Activated T-helper 2 cell treated with anti-CD3 and anti-CD28 coated beads, Interferon-gamma antibody, Interleukin-2, Interleukin-4, amounts not matched to agents 10 μg/mL and 5 μg/mL and 100 μg/mL, durations not matched to agents 14 hours and 24 hours and 36 hours (primary cell): ENCODE measurements at regions of chr6 and their contacts with region 1.

Region 1: DNA sequence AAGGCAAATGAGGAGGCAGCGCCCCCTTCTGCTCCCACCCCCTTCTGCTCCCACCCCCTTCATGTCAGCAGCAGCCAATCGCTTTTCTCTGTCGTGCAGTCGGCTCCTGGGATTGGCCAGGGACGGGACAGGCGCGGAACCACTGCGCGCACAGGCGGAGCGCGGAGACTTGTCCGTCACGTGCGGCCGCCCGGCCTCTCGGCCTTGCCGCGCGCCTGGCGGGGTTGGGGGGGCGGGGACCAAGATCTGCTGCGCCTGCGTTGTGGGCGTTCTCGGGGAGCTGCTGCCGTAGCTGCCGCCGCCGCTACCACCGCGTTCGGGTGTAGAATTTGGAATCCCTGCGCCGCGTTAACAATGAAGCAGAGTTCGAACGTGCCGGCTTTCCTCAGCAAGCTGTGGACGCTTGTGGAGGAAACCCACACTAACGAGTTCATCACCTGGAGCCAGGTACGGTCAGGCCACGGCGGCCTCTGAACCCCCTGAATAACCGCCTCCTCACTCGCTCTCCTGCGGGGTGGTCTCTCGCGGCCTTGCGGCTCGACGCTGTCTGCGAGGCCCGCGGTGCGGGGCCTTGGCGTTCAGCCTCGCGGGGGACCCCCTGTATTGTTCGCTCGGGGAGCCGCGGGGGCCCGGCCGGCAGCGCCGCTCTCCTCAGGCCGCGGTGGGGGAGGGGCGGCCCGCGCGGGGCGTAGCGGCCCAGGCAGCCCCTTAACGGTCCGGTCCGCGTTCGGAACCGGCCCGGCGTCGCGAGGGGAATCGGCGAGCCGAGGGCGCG is at the start of gene HSF2:
- DNase-seq: peak; percentile 93
- H3K4me3 Mint-ChIP-seq: peak within 1 kb of the TSS; percentile 99
- H3K27ac Mint-ChIP-seq: peak within 1 kb of the TSS; percentile 95
- H3K4me1 Mint-ChIP-seq: peaks cover 37% of the 10 kb centered on the region
- H3K27me3 Mint-ChIP-seq: no peaks in the 10 kb centered on the region
- total RNA-seq, gene HSF2: 14.3 and 15.0 TPM in 2 replicates

Region 2: GRCh38 chr6:122381497-122382265 is 17.9 kb before region 1 on chr6:
- intact Hi-C with region 1: loop called (anchors 1 kb)
- DNase-seq: peak; percentile 33
- H3K4me3 Mint-ChIP-seq: no peak overlapping the region
- H3K27ac Mint-ChIP-seq: no peak overlapping the region
- H3K4me1 Mint-ChIP-seq: peaks cover 2% of the 10 kb centered on the region
- H3K27me3 Mint-ChIP-seq: peaks cover 8% of the 10 kb centered on the region

Region 3: DNA sequence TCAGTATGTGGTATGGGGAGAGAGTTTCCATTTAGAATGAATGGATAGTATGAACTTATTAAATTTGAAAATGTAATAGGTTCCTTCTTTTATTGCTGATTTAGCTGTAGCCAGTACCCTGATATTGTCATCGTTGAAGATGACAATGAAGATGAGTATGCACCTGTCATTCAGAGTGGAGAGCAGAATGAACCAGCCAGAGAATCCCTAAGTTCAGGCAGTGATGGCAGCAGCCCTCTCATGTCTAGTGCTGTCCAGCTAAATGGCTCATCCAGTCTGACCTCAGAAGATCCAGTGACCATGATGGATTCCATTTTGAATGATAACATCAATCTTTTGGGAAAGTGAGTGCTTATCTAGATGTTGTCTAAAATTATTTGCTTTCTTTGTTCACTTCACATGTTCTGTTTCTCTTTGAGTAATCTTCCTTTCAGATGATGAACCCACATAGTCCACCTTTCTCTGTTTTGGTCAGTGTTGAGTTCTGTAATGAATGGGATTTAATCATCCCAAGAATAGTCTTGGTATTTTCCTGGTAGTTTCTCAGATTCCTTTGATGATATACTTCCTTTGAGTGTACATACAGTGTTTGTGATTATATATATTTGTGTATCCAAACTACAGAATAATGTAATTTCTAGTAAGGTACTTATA is 23.2 kb after region 1 on chr6:
- intact Hi-C with region 1: loop called (anchors 2 kb)
- DNase-seq: no peak
- H3K4me3 Mint-ChIP-seq: no peak overlapping the region
- H3K27ac Mint-ChIP-seq: no peak overlapping the region
- H3K4me1 Mint-ChIP-seq: peaks cover 10% of the 10 kb centered on the region
- H3K27me3 Mint-ChIP-seq: no peaks in the 10 kb centered on the region

Region 4: GRCh38 chr6:122471107-122472021 is 71.8 kb after region 1 on chr6 and contains the start of gene SERINC1:
- intact Hi-C with region 1: loop called (anchors 1 kb)
- DNase-seq: peak; percentile 88
- H3K4me3 Mint-ChIP-seq: peak within 1 kb of the TSS; percentile 99
- H3K27ac Mint-ChIP-seq: peak within 1 kb of the TSS; percentile 99
- H3K4me1 Mint-ChIP-seq: peaks cover 22% of the 10 kb centered on the region
- H3K27me3 Mint-ChIP-seq: no peaks in the 10 kb centered on the region
- total RNA-seq, gene SERINC1: 44.0 and 46.4 TPM in 2 replicates

Region 5: DNA sequence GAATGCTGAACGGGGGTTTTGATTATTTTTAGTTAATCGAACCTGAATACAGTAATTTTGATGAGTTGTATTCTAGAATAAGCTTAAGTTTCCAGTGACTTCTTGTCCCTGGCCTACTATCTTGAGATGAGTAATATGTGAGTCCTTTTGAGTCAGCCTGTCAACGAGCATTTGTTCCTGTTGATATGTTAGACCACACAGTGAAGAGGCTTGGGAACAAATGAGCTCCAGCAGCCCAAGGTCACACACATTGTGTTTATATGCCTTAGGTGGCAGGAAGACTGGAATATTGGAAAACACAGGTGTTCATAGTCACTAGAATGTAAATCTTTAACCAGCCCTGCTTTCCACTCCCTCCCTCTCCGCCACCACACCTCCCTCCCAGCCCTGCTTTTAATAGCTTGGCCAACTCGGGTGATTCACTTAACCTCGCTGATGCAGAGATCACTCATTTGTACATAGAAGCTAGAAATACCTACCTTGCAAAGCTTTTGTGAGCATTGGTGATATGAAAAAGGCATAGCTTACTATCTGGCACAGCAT is 398.6 kb after region 1 on chr6:
- intact Hi-C with region 1: loop called (anchors 2 kb)
- DNase-seq: peak; percentile 11
- H3K4me3 Mint-ChIP-seq: no peak overlapping the region
- H3K27ac Mint-ChIP-seq: peak overlapping the region; percentile 69
- H3K4me1 Mint-ChIP-seq: peaks cover 13% of the 10 kb centered on the region
- H3K27me3 Mint-ChIP-seq: no peaks in the 10 kb centered on the region